ENCODE measurements at regions of chr1 and their contacts with region 1.

Region 1: GRCh38 chr1:3900119-3900968 is at the start of gene C1orf174:
- DNase-seq: peak; percentile 95
- total RNA-seq, gene C1orf174: 11.5 TPM

Region 2: GRCh38 chr1:3796215-3797061 is 103.9 kb before region 1 on chr1 and contains the start of gene LRRC47:
- intact Hi-C with region 1: loop called (anchors 2 kb)
- DNase-seq: peak; percentile 98
- total RNA-seq, gene LRRC47: 63.1 TPM

Region 3: DNA sequence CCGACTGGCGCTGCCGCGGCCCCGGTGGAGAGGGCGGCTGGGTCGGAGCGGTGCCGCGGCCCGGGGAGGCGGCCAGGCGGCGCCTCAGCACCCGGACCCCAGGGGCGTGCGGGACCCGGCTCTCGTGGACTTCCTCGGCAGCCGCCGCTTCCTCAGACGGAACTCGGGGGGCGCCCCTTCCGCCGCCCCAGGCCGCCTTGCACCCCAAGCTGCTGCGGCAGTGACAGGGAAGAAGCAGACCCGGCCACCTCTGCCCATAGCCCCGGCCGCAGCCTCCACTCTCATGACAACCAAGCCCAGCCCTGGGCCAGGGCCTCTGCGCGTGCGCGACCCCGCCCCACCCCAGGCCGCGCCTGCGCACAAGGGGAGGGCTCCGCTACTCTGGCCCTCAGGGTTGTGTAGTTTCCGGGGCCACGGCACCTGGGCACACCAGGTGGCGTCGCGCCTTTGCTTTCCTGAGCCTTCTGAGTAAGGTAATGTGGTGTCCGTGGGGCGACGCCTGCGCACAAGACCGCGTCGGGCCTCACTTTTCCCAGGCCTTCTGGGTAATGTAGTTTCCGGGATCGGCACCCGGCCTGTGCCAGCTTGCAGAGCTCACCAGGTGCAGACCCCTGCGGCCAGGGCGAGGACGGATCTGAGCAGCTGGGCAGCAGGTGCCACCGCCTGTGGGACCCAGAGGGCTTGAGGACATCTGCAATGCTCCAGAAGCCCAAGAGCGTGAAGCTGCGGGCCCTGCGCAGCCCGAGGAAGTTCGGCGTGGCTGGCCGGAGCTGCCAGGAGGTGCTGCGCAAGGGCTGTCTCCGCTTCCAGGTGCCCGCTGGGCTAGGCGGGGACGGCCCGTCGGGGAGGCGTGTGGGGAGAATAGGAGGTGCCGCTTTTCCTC is 43.2 kb before region 1 on chr1 and contains the starts of genes CEP104 and DFFB:
- intact Hi-C with region 1: loop called (anchors 2 kb)
- DNase-seq: peak; percentile 93
- total RNA-seq, gene CEP104: 32.0 TPM
- total RNA-seq, gene DFFB: 2.9 TPM

Measured in cardiac septum (tissue), 1 donor.